Activated CD8-positive, alpha-beta T cell treated with anti-CD3 and anti-CD28 coated beads for 36 hours (primary cell): ENCODE measurements at regions of chr5 and their contacts with region 1.

Region 1: DNA sequence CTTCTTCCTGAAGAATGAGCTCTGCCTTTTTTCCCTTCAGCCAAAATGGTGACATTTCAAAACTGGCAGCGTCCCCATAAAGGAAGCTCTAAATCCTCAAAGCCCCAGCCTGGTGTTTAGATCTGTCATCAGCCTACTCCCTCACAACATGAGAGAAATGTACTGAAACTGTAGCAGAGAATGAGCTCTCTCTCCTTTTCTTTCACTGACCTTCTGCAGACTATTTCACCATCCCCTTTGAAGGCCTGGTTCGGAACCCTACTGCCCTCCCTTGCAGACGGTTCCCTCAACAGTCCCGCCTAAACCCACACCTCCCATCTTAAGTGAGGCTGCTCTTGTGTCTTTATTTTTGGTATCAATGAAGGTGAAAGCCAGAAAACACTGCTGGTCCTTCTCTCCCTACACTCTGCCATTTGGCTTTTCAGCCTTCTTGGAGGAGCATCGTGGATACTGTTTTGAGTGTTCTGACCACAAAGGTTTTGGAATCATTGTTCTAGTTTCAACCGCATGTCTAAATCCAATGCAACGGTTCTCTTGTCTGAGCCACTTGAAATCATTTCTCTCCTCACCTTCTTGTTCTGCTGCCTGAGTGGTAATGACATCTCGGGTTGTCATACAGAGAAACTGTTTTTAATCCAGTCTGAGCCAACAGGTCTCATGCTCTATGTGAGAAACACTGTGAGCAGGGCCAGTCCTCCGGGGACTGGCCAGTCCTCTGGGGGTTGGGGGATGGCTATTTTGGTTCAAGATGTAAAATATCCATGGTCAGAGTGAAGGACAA is 39.0 kb downstream of the ITK start:
- DNase-seq: peak; percentile 56
- ATAC-seq: peak; percentile 42
- H3K4me3 Mint-ChIP-seq: peak overlapping the region; percentile 49
- H3K27ac Mint-ChIP-seq: peak overlapping the region; percentile 92
- H3K4me1 Mint-ChIP-seq: peaks cover 82% of the 10 kb centered on the region
- H3K27me3 Mint-ChIP-seq: no peaks in the 10 kb centered on the region
- CTCF ChIP-seq: no peak

Region 2: DNA sequence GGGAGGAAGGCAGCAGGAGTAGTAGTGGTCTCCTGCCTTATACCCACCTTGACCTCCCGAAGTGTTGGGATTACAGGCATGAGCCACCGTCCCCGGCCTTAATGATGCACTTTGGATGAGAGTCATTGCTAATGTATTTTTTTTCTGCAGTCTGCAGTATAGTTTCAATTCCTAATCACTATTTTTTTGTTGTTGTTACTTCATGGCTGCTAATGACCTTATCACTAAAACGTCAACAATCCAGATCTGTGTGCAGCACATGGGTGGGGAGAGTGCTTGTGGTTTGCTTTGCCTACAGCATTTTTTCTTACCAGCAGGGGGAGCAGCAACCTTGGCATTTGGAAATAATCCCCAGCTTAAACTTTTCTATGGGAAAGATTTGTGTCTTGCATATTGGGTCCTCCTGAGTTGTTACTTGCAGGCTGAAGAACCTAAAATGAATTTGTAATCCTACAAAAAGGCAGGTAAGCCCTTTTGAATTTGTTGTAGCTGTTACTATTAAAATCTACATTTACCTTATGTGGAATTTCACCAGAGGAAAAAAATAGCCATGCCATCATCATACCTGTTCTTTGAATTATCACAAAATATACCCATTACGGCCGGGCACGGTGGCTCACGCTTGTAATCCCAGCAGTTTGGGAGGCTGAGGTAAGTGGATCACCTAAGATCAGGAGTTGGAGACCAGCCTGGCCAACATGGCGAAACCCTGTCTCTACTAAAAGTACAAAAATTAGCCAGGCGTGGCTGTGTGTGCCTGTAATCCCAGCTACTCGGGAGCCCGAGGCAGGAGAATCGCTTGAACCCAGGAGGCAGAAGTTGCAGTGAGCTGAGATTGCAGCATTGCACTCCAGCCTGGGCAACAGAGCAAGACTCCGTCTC is 70.7 kb before region 1 on chr5:
- CTCF ChIA-PET with region 1: interaction called, 27 read pairs
- POLR2A ChIA-PET with region 1: interaction called, 13 read pairs
- intact Hi-C with region 1: loop called (anchors 5 kb)
- DNase-seq: peak; percentile 91
- ATAC-seq: peak; percentile 45
- H3K4me3 Mint-ChIP-seq: peak overlapping the region; percentile 6
- H3K27ac Mint-ChIP-seq: peak overlapping the region; percentile 80
- H3K4me1 Mint-ChIP-seq: peaks cover 46% of the 10 kb centered on the region
- H3K27me3 Mint-ChIP-seq: no peaks in the 10 kb centered on the region
- CTCF ChIP-seq: peak; percentile 89

Region 3: GRCh38 chr5:157180374-157181264 is 39.1 kb before region 1 on chr5 and contains the start of gene ITK:
- CTCF ChIA-PET with region 1: interaction called, 6 read pairs
- POLR2A ChIA-PET with region 1: interaction called, 1,980 read pairs
- intact Hi-C with region 1: loop called (anchors 2 kb)
- DNase-seq: peak; percentile 59
- ATAC-seq: peak; percentile 62
- H3K4me3 Mint-ChIP-seq: peak within 1 kb of the TSS; percentile 99
- H3K27ac Mint-ChIP-seq: peak within 1 kb of the TSS; percentile 100
- H3K4me1 Mint-ChIP-seq: peaks cover 40% of the 10 kb centered on the region
- H3K27me3 Mint-ChIP-seq: no peaks in the 10 kb centered on the region
- CTCF ChIP-seq: no peak
- total RNA-seq, gene ITK: 229 to 236 TPM

Region 4: GRCh38 chr5:157204765-157205164 is 14.9 kb before region 1 on chr5:
- CTCF ChIA-PET with region 1: interaction called, 11 read pairs
- POLR2A ChIA-PET with region 1: interaction called, 1,980 read pairs
- intact Hi-C with region 1: no loop called
- DNase-seq: no peak
- ATAC-seq: no peak
- H3K4me3 Mint-ChIP-seq: peak overlapping the region; percentile 66
- H3K27ac Mint-ChIP-seq: peak overlapping the region; percentile 91
- H3K4me1 Mint-ChIP-seq: peaks cover 82% of the 10 kb centered on the region
- H3K27me3 Mint-ChIP-seq: no peaks in the 10 kb centered on the region
- CTCF ChIP-seq: no peak

Region 5: DNA sequence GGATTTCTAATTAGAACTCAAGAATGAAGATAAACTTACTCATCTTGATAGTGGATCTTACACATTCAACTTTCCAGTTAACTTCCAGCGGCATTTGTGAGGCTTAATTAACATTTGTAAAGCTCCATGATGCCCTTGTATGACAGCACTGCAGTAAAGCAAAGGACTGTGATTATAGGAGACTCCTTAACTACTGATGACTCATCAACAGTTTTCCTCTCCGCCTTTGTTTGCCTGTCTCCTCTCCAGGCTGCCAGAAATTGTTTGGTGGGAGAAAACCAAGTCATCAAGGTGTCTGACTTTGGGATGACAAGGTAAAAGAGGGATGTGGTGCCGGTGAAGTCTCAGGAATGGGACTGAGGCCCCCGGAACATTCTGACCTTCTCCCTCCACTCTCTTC is 25.8 kb after region 1 on chr5:
- CTCF ChIA-PET with region 1: no interaction called
- POLR2A ChIA-PET with region 1: interaction called, 36 read pairs
- intact Hi-C with region 1: no loop called
- DNase-seq: no peak
- ATAC-seq: no peak
- H3K4me3 Mint-ChIP-seq: no peak overlapping the region
- H3K27ac Mint-ChIP-seq: peak overlapping the region; percentile 95
- H3K4me1 Mint-ChIP-seq: peaks cover 88% of the 10 kb centered on the region
- H3K27me3 Mint-ChIP-seq: no peaks in the 10 kb centered on the region
- CTCF ChIP-seq: no peak

Region 6: DNA sequence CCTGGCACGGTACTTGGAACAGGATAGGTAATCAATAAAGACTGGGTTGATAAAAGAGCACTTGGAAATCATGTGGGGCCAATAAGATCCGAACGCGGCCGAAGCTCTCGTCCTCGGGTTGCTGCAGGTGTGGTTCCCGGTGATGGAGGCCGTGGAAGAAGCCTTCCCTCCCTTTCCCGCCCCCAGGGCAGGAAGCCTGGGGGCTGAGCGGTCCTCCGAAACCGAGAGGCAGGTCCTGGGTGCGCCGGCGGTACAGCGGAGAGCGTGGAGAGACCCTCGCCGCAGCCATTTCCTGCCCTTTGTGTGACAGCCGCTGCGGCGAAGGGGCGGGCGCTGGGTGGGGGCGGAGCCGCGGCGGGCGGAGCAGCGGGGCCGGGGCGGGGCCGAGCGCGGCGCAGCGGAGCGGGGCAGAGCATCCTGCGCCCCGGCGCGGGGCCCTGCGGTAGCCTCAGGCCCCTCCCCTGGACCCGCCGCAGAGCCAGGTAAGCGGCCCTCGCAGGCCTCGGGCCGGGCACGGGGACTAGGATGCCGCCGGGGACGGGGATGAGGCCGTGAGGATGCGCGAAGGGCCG is 46.1 kb after region 1 on chr5 and contains the start of gene CYFIP2:
- CTCF ChIA-PET with region 1: interaction called, 6 read pairs
- POLR2A ChIA-PET with region 1: interaction called, 16 read pairs
- intact Hi-C with region 1: loop called (anchors 5 kb)
- DNase-seq: peak; percentile 90
- ATAC-seq: peak; percentile 80
- H3K4me3 Mint-ChIP-seq: peak within 1 kb of the TSS; percentile 91
- H3K27ac Mint-ChIP-seq: peak within 1 kb of the TSS; percentile 97
- H3K4me1 Mint-ChIP-seq: peaks cover 65% of the 10 kb centered on the region
- H3K27me3 Mint-ChIP-seq: no peaks in the 10 kb centered on the region
- CTCF ChIP-seq: no peak
- total RNA-seq, gene CYFIP2: 350 to 351 TPM

Region 7: GRCh38 chr5:157342822-157343402 is 123.2 kb after region 1 on chr5:
- CTCF ChIA-PET with region 1: no interaction called
- POLR2A ChIA-PET with region 1: no interaction called
- intact Hi-C with region 1: no loop called
- DNase-seq: peak; percentile 46
- ATAC-seq: no peak
- H3K4me3 Mint-ChIP-seq: no peak overlapping the region
- H3K27ac Mint-ChIP-seq: peak overlapping the region; percentile 50
- H3K4me1 Mint-ChIP-seq: peaks cover 39% of the 10 kb centered on the region
- H3K27me3 Mint-ChIP-seq: no peaks in the 10 kb centered on the region
- CTCF ChIP-seq: peak; percentile 69